Adrenal gland (tissue), 19 donors: ENCODE measurements at regions of chr17 and their contacts with region 1.

Region 1: GRCh38 chr17:2602597-2603017 is 9.2 kb downstream of the PAFAH1B1 start:
- DNase-seq: no peak
- H3K4me3 ChIP-seq: no peak overlapping the region
- H3K27ac ChIP-seq: no peak overlapping the region
- H3K4me1 ChIP-seq: peaks cover 21 to 57% of the 10 kb centered on the region in 2 donors
- H3K27me3 ChIP-seq: no peaks in the 10 kb centered on the region
- CTCF ChIP-seq: no peak
- POLR2A ChIP-seq: no peak

Region 2: GRCh38 chr17:2468270-2468669 is 134.3 kb before region 1 on chr17:
- intact Hi-C with region 1: no loop called
- DNase-seq: no peak
- H3K4me3 ChIP-seq: no peak overlapping the region
- H3K27ac ChIP-seq: no peak overlapping the region
- H3K4me1 ChIP-seq: no peaks in the 10 kb centered on the region
- H3K27me3 ChIP-seq: no peaks in the 10 kb centered on the region
- CTCF ChIP-seq: no peak
- POLR2A ChIP-seq: no peak

Region 3: DNA sequence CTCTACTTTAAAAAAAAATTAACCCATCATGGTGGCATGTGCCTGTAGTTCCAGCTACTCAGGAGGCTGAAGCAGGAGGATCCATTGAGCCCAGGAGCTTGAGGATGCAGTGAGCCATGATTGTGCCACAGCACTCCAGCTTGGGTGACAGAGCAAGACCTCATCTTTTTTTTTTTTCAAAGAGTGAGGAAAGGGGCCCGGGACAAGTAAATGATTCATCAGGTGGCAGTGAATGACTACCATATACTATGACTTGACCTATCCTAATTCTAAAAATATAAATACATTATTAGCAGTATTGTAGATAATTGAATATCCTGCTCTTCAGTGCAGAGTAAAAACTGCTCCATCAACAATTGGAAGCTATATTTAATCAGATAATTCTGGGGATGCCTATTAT is 53.7 kb after region 1 on chr17:
- intact Hi-C with region 1: loop called in 1 of 2 experiments (anchors 10 kb)
- DNase-seq: no peak
- H3K4me3 ChIP-seq: no peak overlapping the region
- H3K27ac ChIP-seq: no peak overlapping the region
- H3K4me1 ChIP-seq: peaks cover 0 to 5% of the 10 kb centered on the region in 2 donors
- H3K27me3 ChIP-seq: no peaks in the 10 kb centered on the region
- CTCF ChIP-seq: no peak
- POLR2A ChIP-seq: no peak